Activated CD8-positive, alpha-beta memory T cell treated with anti-CD3 and anti-CD28 coated beads, Interleukin-2, amount 10 ng/mL, durations not matched to agents 7 days and 5 days (primary cell): ENCODE measurements at regions of chr17 and their contacts with region 1.

Region 1: GRCh38 chr17:67475236-67475937 is 98.3 kb downstream of the PITPNC1 start:
- DNase-seq: peak; percentile 92
- ATAC-seq: peak; percentile 84
- H3K4me3 Mint-ChIP-seq: peak overlapping the region; percentile 64
- H3K27ac Mint-ChIP-seq: peak overlapping the region; percentile 93
- H3K4me1 Mint-ChIP-seq: peaks cover 68% of the 10 kb centered on the region
- H3K27me3 Mint-ChIP-seq: no peaks in the 10 kb centered on the region

Region 2: GRCh38 chr17:67157732-67158639 is 317.4 kb before region 1 on chr17:
- CTCF ChIA-PET with region 1: no interaction called
- DNase-seq: no peak
- ATAC-seq: peak; percentile 78
- H3K4me3 Mint-ChIP-seq: peak overlapping the region; percentile 28
- H3K27ac Mint-ChIP-seq: peak overlapping the region; percentile 79
- H3K4me1 Mint-ChIP-seq: peaks cover 25% of the 10 kb centered on the region
- H3K27me3 Mint-ChIP-seq: no peaks in the 10 kb centered on the region

Region 3: GRCh38 chr17:67390646-67391384 is 84.6 kb before region 1 on chr17:
- CTCF ChIA-PET with region 1: interaction called, 144 read pairs
- DNase-seq: peak; percentile 94
- ATAC-seq: peak; percentile 90
- H3K4me3 Mint-ChIP-seq: peak overlapping the region; percentile 78
- H3K27ac Mint-ChIP-seq: peak overlapping the region; percentile 95
- H3K4me1 Mint-ChIP-seq: peaks cover 75% of the 10 kb centered on the region
- H3K27me3 Mint-ChIP-seq: no peaks in the 10 kb centered on the region

Region 4: GRCh38 chr17:67431249-67432048 is 43.9 kb before region 1 on chr17:
- CTCF ChIA-PET with region 1: interaction called, 28 read pairs
- DNase-seq: no peak
- ATAC-seq: peak; percentile 52
- H3K4me3 Mint-ChIP-seq: no peak overlapping the region
- H3K27ac Mint-ChIP-seq: peak overlapping the region; percentile 76
- H3K4me1 Mint-ChIP-seq: peaks cover 62% of the 10 kb centered on the region
- H3K27me3 Mint-ChIP-seq: no peaks in the 10 kb centered on the region

Region 5: DNA sequence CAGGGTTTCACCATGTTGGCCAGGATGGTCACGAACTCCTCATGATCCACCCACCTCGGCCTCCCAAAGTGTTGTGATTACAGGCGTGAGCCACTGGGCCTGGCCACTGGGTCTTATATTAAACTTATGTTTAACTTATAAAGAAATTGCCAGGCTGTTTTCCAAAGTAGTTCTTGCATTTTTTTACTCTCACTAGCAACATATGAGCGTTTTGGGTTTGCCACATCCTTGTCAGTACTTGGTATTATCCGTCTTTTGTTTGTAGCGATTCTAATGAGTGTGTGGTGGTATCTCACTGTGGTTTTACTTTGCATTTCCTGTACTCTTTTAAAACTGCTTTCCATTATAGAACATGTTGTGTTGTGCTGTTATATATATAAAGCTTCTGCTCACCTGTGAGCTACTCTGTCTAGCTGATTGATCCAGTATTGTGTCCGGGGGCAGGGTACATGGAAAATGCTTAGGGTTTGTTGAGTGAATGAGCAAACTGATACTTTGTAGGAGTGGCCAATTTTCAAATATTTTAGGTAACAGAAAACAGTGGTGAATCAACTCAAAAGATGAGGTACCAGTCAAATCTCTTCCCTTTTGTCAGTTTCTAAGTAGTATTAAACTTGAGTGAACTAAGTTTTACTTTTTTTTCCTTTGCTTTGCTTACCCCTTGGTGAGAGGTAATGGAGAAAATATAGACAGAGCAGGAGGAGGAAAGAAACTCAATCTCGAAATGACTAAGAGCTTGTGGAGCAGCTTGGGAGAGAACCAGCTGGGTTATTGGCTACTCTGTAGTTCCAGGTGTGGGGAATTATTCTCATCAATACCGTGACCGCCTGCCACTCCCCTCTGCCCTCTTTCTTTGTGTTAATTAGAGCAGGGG is 22.5 kb before region 1 on chr17:
- CTCF ChIA-PET with region 1: interaction called, 37 read pairs
- DNase-seq: peak; percentile 67
- ATAC-seq: peak; percentile 87
- H3K4me3 Mint-ChIP-seq: peak overlapping the region; percentile 67
- H3K27ac Mint-ChIP-seq: peak overlapping the region; percentile 93
- H3K4me1 Mint-ChIP-seq: peaks cover 65% of the 10 kb centered on the region
- H3K27me3 Mint-ChIP-seq: no peaks in the 10 kb centered on the region

Region 6: GRCh38 chr17:67488161-67488560 is 12.8 kb after region 1 on chr17:
- CTCF ChIA-PET with region 1: interaction called, 18 read pairs
- DNase-seq: no peak
- ATAC-seq: no peak
- H3K4me3 Mint-ChIP-seq: no peak overlapping the region
- H3K27ac Mint-ChIP-seq: no peak overlapping the region
- H3K4me1 Mint-ChIP-seq: peaks cover 65% of the 10 kb centered on the region
- H3K27me3 Mint-ChIP-seq: no peaks in the 10 kb centered on the region